T-cell (primary cell): ENCODE measurements at regions of chr1 and their contacts with region 1.

Region 1: DNA sequence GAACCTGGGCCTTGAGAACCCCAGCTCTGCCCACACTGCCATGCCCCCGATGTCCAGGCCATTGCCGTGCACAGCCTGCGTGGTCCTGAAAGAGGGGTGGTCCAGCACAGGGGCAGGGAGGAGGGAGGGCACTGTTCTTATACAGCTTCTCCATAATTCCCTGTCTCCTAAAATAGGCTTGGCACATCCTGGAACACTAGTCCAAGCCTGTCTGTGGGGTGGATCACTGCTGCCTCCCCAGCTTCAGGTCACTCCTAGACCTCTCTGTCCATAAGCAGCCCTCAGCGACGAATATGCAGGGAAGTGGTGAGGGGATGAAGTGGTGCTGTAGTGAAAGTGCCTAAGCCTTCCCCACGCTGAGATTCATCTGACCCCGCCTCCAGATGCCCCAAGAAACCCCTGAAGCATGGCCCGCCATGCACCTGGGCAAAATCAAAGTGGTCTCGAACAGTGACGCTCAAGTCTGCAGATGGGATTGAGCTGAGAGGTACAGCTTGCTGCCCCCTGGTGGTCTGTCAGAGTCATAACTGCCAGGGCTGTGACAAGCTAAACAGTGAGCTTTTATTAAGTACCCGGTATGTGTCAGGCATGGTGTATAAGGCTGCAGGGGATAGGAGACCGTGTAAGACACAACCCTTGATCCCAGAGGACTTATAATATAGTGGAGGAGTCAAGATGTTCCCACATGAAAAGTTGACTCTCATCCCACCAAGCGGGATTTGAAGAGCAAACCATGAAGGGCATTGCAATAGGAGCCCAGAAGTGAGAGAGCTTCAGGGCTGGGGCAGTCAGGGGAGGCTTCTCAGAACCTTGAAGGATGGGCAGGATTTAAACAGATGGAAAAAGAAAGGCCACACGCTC is 66.6 kb downstream of the FAM163A start:
- DNase-seq: peak; percentile 36 to 88 (median 66)
- ATAC-seq: peak; percentile 54 to 76 (median 62)
- H3K4me3 ChIP-seq: no peak overlapping the region
- H3K4me3 Mint-ChIP-seq: no peak overlapping the region
- H3K27ac ChIP-seq: no peak overlapping the region
- H3K27ac Mint-ChIP-seq: no peak overlapping the region
- H3K4me1 ChIP-seq: peaks cover 0 to 18% of the 10 kb centered on the region in 2 experiments
- H3K4me1 Mint-ChIP-seq: peaks cover 10 to 13% (median 13%) of the 10 kb centered on the region in 3 donors
- H3K27me3 ChIP-seq: peaks cover 0 to 50% of the 10 kb centered on the region in 2 experiments
- H3K27me3 Mint-ChIP-seq: peaks cover 4 to 5% of the 10 kb centered on the region in 2 donors

Region 2: DNA sequence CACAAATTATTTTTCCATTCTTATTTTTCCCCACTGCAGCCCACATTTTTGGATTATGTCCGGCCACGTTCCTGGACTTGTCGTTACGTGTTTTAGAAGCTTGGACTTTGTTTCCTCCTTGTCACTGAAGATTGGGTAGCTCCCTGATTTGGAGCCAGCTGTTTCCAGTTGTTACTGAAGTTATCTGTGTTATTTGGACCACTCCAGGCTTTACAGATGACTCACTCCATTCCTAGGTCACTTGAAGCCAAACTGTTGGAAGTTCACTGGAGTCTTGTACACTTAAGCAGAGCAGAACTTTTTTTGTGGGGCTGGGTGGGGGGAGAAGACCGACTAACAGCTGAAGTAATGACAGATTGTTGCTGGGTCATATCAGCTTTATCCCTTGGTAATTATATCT is 456.2 kb before region 1 on chr1:
- CTCF ChIA-PET with region 1: interaction called in 1 of 2 experiments, 10 read pairs
- POLR2A ChIA-PET with region 1: no interaction called
- DNase-seq: no peak
- ATAC-seq: no peak
- H3K4me3 ChIP-seq: no peak overlapping the region
- H3K4me3 Mint-ChIP-seq: no peak overlapping the region
- H3K27ac ChIP-seq: no peak overlapping the region
- H3K27ac Mint-ChIP-seq: no peak overlapping the region
- H3K4me1 ChIP-seq: no peaks in the 10 kb centered on the region
- H3K4me1 Mint-ChIP-seq: peaks cover 0 to 5% (median 0%) of the 10 kb centered on the region in 3 donors
- H3K27me3 ChIP-seq: no peaks in the 10 kb centered on the region
- H3K27me3 Mint-ChIP-seq: no peaks in the 10 kb centered on the region

Region 3: GRCh38 chr1:179663810-179664209 is 145.9 kb before region 1 on chr1:
- CTCF ChIA-PET with region 1: no interaction called
- POLR2A ChIA-PET with region 1: no interaction called
- DNase-seq: no peak
- ATAC-seq: no peak
- H3K4me3 ChIP-seq: no peak overlapping the region
- H3K4me3 Mint-ChIP-seq: no peak overlapping the region
- H3K27ac ChIP-seq: no peak overlapping the region
- H3K27ac Mint-ChIP-seq: no peak overlapping the region
- H3K4me1 ChIP-seq: no peaks in the 10 kb centered on the region
- H3K4me1 Mint-ChIP-seq: no peaks in the 10 kb centered on the region
- H3K27me3 ChIP-seq: peaks cover 0 to 4% of the 10 kb centered on the region in 2 experiments
- H3K27me3 Mint-ChIP-seq: peaks cover 8 to 13% of the 10 kb centered on the region in 2 donors

Region 4: GRCh38 chr1:179706339-179706941 is 103.3 kb before region 1 on chr1:
- CTCF ChIA-PET with region 1: interaction called, 208 to 411 read pairs
- POLR2A ChIA-PET with region 1: interaction called, 5 to 9 read pairs
- DNase-seq: peak; percentile 3 to 83 (median 52)
- ATAC-seq: peak in 1 of 4 experiments; percentile 46
- H3K4me3 ChIP-seq: no peak overlapping the region
- H3K4me3 Mint-ChIP-seq: no peak overlapping the region
- H3K27ac ChIP-seq: no peak overlapping the region
- H3K27ac Mint-ChIP-seq: no peak overlapping the region
- H3K4me1 ChIP-seq: peaks cover 7% of the 10 kb centered on the region in 2 experiments
- H3K4me1 Mint-ChIP-seq: peaks cover 16 to 19% (median 17%) of the 10 kb centered on the region in 3 donors
- H3K27me3 ChIP-seq: no peaks in the 10 kb centered on the region
- H3K27me3 Mint-ChIP-seq: no peaks in the 10 kb centered on the region

Region 5: DNA sequence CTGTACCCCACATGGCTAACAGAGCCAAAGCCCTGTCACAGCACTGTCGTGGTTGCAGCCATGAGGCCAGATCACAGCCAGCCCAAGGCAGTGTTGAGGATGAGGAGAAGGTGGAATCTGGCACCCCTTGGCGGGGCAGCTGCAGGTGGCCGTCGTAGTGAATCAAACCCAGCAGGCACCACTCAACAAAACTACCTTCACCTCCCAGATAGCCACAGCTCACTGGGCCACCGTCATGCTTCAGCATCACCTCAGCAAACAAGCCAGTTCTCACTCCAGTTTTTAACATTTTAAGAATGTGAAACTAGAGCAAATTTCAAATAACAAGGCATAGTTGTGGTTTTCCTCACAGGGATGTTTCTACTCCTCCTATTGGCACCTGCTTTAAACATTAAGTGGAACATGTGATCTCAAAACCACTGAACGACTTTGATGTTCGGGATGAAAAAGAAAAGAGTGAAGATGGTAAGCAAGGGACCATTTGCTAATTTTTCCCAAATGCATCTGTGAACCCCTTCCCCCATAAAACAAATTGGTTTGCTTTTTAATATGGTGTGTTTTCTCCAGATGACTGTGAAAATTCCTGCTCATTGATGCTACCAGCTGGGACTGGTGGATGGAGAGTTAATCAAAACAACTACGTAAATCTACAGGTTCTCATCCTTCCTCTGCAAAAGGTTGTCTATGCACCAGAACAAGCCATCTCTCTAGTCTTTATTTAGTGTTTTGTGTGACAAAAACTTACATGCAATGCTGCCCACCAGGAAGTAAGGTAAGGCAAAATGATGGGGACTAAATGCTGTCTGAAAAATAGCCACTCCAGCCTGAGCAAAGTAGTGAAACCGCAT is 22.3 kb after region 1 on chr1:
- CTCF ChIA-PET with region 1: interaction called, 5 to 15 read pairs
- POLR2A ChIA-PET with region 1: interaction called, 3 to 6 read pairs
- DNase-seq: peak in 6 of 35 experiments; percentile 14 to 57 (median 24)
- ATAC-seq: peak; percentile 65 to 90 (median 80)
- H3K4me3 ChIP-seq: peak overlapping the region in 1 of 2 donors; percentile 15
- H3K4me3 Mint-ChIP-seq: peak overlapping the region; percentile 50 to 72 (median 56)
- H3K27ac ChIP-seq: peak overlapping the region; percentile 52
- H3K27ac Mint-ChIP-seq: peak overlapping the region; percentile 85 to 89
- H3K4me1 ChIP-seq: peaks cover 11 to 16% of the 10 kb centered on the region in 2 experiments
- H3K4me1 Mint-ChIP-seq: peaks cover 25 to 35% (median 26%) of the 10 kb centered on the region in 3 donors
- H3K27me3 ChIP-seq: peaks cover 0 to 6% of the 10 kb centered on the region in 2 experiments
- H3K27me3 Mint-ChIP-seq: no peaks in the 10 kb centered on the region

Region 6: DNA sequence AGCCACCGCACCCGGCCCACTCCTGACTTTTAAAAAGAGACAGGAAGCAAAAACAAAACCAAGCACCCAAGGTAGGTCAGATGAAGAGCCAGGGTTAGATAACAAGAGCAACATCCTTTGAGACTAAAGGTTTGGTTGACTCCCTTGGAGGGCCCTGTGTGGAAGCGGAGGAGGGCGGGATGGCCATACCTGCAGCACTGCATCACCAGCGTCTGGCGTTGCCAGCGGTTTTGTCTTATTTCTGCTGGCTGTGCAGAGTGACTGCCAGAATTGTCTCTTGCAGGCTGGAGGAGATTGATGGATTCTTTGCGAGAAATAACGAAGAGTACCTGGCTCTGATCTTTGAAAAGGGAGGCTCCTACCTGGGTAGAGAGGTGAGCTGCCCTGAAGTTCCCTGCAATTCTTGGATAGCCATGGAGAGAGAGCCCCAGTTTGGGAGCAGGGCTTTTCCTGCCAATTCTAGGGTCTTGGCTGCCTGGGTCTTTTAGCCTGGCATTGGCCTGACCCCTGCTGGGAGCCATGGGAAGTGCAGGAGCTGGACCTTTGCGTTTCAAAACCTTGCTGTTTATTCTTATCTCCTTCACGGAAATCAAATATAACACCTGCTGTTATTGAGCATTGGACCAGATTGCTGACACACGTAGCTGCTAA is 368.9 kb after region 1 on chr1:
- CTCF ChIA-PET with region 1: interaction called, 3 to 13 read pairs
- POLR2A ChIA-PET with region 1: no interaction called
- DNase-seq: peak in 31 of 35 experiments; percentile 15 to 75 (median 57)
- ATAC-seq: peak; percentile 60 to 75 (median 67)
- H3K4me3 ChIP-seq: no peak overlapping the region
- H3K4me3 Mint-ChIP-seq: no peak overlapping the region
- H3K27ac ChIP-seq: no peak overlapping the region
- H3K27ac Mint-ChIP-seq: peak overlapping the region in 1 of 2 donors; percentile 64
- H3K4me1 ChIP-seq: no peaks in the 10 kb centered on the region
- H3K4me1 Mint-ChIP-seq: no peaks in the 10 kb centered on the region
- H3K27me3 ChIP-seq: no peaks in the 10 kb centered on the region
- H3K27me3 Mint-ChIP-seq: no peaks in the 10 kb centered on the region